A549 (cell line): ENCODE measurements at regions of chr5 and their contacts with region 1.

Region 1: DNA sequence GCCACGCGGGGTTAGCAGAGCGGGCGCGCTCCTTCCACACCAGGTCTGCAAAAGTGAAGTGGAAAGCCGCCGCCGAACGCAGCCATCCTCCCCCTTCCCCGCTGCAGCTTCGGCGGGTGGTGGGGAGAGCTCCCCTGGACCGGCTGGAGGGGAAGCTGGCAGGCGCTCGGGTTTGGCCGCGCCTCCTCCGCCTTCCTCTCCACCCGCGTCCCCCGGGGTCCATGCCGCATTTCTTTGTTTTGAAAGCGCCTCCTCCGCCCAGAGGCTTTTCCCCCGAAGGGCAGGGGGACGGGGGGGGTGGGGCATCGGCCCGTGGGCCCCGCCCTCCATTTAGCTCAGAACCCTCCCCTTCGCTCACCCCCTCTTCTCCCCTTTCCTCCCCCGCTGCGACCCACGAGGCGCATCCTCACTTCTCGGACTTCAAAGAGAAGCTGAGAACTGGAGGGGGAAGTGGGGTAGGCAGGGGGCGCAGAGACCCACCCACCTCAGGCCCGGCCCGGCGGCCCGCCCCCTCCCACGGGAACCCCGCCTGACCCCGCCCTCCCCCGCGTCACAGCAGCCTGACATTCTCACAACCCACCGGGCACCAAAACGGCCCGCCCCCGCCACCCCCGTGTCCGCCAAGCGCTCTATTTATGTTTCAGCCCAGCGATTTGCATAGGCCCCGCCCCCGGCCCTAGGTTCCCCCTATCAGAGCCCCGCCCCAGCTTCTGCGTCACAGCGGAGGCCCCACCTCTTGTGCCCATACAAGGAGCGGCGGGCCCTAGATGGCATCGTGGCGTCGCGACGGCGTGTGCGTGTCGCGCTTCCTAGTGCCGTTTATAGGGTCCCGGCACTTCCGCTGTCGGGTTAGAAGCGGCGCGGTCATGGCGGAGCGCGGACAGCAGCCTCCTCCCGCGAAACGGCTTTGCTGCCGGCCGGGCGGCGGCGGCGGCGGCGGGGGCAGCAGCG is at the start of gene ZSWIM6:
- DNase-seq: peak; percentile 93 to 100
- ATAC-seq: peak; percentile 63 to 74
- H3K4me3 ChIP-seq: peak within 1 kb of the TSS; percentile 95
- H3K27ac ChIP-seq: peak within 1 kb of the TSS; percentile 88 to 95
- H3K4me1 ChIP-seq: peaks cover 42% of the 10 kb centered on the region
- CTCF ChIP-seq: no peak
- EP300 ChIP-seq: no peak
- POLR2A ChIP-seq: peak; percentile 93
- RAD21 ChIP-seq: peak; percentile 1 to 30; a peak in 2 of 5 replicates
- polyA plus RNA-seq, gene ZSWIM6: 18.0 and 20.9 TPM in 2 replicates

Region 2: GRCh38 chr5:61168951-61169350 is 162.7 kb before region 1 on chr5:
- CTCF ChIA-PET with region 1: interaction called, 12 read pairs
- POLR2A ChIA-PET with region 1: interaction called, 11 read pairs
- DNase-seq: no peak
- ATAC-seq: no peak
- H3K4me3 ChIP-seq: no peak overlapping the region
- H3K27ac ChIP-seq: no peak overlapping the region
- H3K4me1 ChIP-seq: no peaks in the 10 kb centered on the region; the same call in 2 of the 3 replicates
- CTCF ChIP-seq: no peak
- EP300 ChIP-seq: no peak
- POLR2A ChIP-seq: no peak
- RAD21 ChIP-seq: no peak

Region 3: GRCh38 chr5:61306511-61307131 is 25.1 kb before region 1 on chr5:
- CTCF ChIA-PET with region 1: interaction called, 73 read pairs
- POLR2A ChIA-PET with region 1: interaction called, 124 read pairs
- DNase-seq: peak in 1 of 2 experiments; percentile 77
- ATAC-seq: peak in 1 of 2 experiments; percentile 40; a peak in 3 of 6 replicates
- H3K4me3 ChIP-seq: no peak overlapping the region
- H3K27ac ChIP-seq: peak overlapping the region; percentile 55 to 88
- H3K4me1 ChIP-seq: peaks cover 69% of the 10 kb centered on the region
- CTCF ChIP-seq: no peak
- EP300 ChIP-seq: no peak
- POLR2A ChIP-seq: no peak
- RAD21 ChIP-seq: no peak

Region 4: GRCh38 chr5:61319388-61320146 is 12.1 kb before region 1 on chr5:
- CTCF ChIA-PET with region 1: interaction called, 15 read pairs
- POLR2A ChIA-PET with region 1: interaction called, 31 read pairs
- DNase-seq: no peak
- ATAC-seq: no peak; a peak in 1 of 6 replicates
- H3K4me3 ChIP-seq: no peak overlapping the region
- H3K27ac ChIP-seq: peak overlapping the region in 1 of 2 experiments; percentile 16; a peak in 1 of 6 replicates
- H3K4me1 ChIP-seq: peaks cover 26% of the 10 kb centered on the region
- CTCF ChIP-seq: no peak
- EP300 ChIP-seq: no peak
- POLR2A ChIP-seq: no peak
- RAD21 ChIP-seq: no peak

Region 5: DNA sequence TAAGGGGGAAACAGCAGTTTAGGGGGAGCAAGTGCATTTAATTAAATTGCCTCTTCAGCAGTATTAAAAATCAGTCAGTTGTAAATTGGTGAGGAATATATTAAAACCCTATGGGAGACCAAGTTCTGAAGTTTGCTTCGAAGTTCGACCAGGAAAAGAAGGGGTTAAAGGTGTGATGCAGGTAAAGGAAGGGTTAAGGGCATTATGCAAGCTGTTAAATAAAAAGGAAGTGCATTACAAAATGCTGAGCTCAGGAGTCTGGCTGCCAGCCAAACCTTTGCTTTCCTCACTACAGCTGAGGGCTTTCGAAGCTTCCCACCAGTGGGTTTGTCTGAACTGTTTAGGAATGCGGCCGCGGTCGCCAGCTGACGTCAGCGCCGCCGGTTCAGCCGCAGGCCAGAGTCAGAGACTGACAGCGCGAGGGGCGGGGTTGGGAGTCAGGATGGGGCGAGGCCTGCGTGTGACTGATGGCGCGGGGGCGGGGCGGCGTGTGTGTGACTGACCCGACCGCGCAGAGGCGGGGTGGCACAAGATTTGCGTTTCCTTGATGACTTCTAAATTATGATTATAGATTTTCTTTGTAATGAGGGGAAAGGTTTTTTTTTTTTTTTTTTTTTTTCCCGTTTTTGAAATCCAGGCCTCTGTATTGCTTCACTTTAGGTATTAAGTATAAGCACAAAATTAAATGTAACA is 76.9 kb after region 1 on chr5:
- CTCF ChIA-PET with region 1: interaction called, 5 read pairs
- POLR2A ChIA-PET with region 1: interaction called, 50 read pairs
- DNase-seq: peak; percentile 97 to 100
- ATAC-seq: peak; percentile 95 to 98
- H3K4me3 ChIP-seq: peak overlapping the region; percentile 30
- H3K27ac ChIP-seq: peak overlapping the region; percentile 88 to 91
- H3K4me1 ChIP-seq: peaks cover 73% of the 10 kb centered on the region
- CTCF ChIP-seq: no peak
- EP300 ChIP-seq: peak; percentile 94 to 97
- POLR2A ChIP-seq: no peak
- RAD21 ChIP-seq: peak; percentile 21 to 69; a peak in 4 of 5 replicates

Region 6: GRCh38 chr5:61551637-61552313 is 220.1 kb after region 1 on chr5:
- CTCF ChIA-PET with region 1: no interaction called
- POLR2A ChIA-PET with region 1: no interaction called
- DNase-seq: no peak
- ATAC-seq: peak in 1 of 2 experiments; percentile 17; a peak in 2 of 6 replicates
- H3K4me3 ChIP-seq: no peak overlapping the region
- H3K27ac ChIP-seq: no peak overlapping the region
- H3K4me1 ChIP-seq: no peaks in the 10 kb centered on the region
- CTCF ChIP-seq: no peak
- EP300 ChIP-seq: no peak
- POLR2A ChIP-seq: no peak
- RAD21 ChIP-seq: no peak

Region 7: GRCh38 chr5:61599370-61600122 is 267.9 kb after region 1 on chr5:
- CTCF ChIA-PET with region 1: interaction called, 3 read pairs
- POLR2A ChIA-PET with region 1: interaction called, 13 read pairs
- DNase-seq: peak; percentile 70 to 98
- ATAC-seq: peak; percentile 80 to 94
- H3K4me3 ChIP-seq: no peak overlapping the region
- H3K27ac ChIP-seq: peak overlapping the region; percentile 81 to 85
- H3K4me1 ChIP-seq: peaks cover 66% of the 10 kb centered on the region
- CTCF ChIP-seq: no peak
- EP300 ChIP-seq: peak; percentile 62 to 83; a peak in 4 of 5 replicates
- POLR2A ChIP-seq: no peak
- RAD21 ChIP-seq: peak; percentile 35 to 48; a peak in 4 of 5 replicates

Region 8: DNA sequence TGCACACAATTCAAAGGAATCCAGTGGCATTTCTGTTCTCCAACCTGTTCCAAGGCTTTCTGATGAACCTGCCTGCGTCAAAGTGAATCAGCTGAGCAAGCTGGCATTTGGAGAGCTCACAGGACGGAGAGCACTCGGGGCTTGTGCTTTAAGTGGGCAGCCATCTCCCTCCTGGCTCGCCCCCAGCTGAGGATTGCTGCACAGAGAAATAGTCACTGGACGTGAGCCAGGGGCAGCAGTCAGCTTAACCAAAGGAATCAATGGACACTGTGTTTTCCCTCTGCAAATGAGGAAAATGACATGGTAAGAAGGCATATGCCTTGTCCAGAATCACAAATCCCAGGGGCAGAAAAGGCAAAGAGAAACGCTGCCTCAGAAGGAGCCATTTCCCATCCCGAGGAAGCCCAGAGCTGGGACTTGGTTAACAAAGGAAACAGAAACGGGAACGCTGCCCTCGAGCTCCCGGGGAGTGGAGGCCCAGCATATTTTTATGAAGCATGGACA is 299.8 kb after region 1 on chr5:
- CTCF ChIA-PET with region 1: no interaction called
- POLR2A ChIA-PET with region 1: no interaction called
- DNase-seq: no peak
- ATAC-seq: no peak
- H3K4me3 ChIP-seq: no peak overlapping the region
- H3K27ac ChIP-seq: peak overlapping the region in 1 of 2 experiments; percentile 8; a peak in 1 of 6 replicates
- H3K4me1 ChIP-seq: peaks cover 3% of the 10 kb centered on the region; the same call in 1 of the 3 replicates
- CTCF ChIP-seq: no peak
- EP300 ChIP-seq: no peak
- POLR2A ChIP-seq: no peak
- RAD21 ChIP-seq: no peak